IMR-90 (cell line): ENCODE measurements at regions of chrX and their contacts with region 1.

Region 1: GRCh38 chrX:52261463-52262194 is 76.9 kb downstream of the MAGED4 start:
- DNase-seq: peak; percentile 85
- ATAC-seq: peak; percentile 100
- H3K4me3 ChIP-seq: peak overlapping the region; percentile 68
- H3K27ac ChIP-seq: peak overlapping the region; percentile 87
- H3K4me1 ChIP-seq: no peaks in the 10 kb centered on the region
- H3K27me3 ChIP-seq: peaks cover 2% of the 10 kb centered on the region
- CTCF ChIP-seq: peak; percentile 96
- POLR2A ChIP-seq: no peak; the same call in 1 of the 2 replicates
- RAD21 ChIP-seq: peak; percentile 89

Region 2: DNA sequence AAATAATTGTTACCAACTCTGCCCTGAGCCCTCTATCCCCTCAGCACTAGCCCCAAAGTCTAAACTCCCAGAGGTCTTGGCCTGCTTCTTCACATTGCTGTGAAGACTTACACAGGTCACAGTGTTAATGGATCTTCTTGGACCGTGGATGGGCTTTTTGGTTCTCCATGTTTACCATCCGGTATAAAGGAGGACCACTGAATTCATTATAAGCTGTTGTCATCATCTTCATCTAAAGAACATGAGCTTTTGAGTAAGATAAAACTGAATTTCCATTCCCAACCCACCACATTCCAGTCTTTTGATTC is 773.7 kb before region 1 on chrX:
- CTCF ChIA-PET with region 1: no interaction called
- POLR2A ChIA-PET with region 1: no interaction called
- dilution Hi-C with region 1: no loop called
- in situ Hi-C with region 1: no loop called
- intact Hi-C with region 1: loop called (anchors 5 kb)
- DNase-seq: peak; percentile 21
- ATAC-seq: peak; percentile 27
- H3K4me3 ChIP-seq: no peak overlapping the region
- H3K27ac ChIP-seq: no peak overlapping the region
- H3K4me1 ChIP-seq: peaks cover 2% of the 10 kb centered on the region
- H3K27me3 ChIP-seq: no peaks in the 10 kb centered on the region
- CTCF ChIP-seq: no peak
- POLR2A ChIP-seq: no peak
- RAD21 ChIP-seq: no peak